Activated CD4-positive, alpha-beta T cell treated with anti-CD3 and anti-CD28 coated beads for 36 hours (primary cell): ENCODE measurements at regions of chr1 and their contacts with region 1.

Region 1: DNA sequence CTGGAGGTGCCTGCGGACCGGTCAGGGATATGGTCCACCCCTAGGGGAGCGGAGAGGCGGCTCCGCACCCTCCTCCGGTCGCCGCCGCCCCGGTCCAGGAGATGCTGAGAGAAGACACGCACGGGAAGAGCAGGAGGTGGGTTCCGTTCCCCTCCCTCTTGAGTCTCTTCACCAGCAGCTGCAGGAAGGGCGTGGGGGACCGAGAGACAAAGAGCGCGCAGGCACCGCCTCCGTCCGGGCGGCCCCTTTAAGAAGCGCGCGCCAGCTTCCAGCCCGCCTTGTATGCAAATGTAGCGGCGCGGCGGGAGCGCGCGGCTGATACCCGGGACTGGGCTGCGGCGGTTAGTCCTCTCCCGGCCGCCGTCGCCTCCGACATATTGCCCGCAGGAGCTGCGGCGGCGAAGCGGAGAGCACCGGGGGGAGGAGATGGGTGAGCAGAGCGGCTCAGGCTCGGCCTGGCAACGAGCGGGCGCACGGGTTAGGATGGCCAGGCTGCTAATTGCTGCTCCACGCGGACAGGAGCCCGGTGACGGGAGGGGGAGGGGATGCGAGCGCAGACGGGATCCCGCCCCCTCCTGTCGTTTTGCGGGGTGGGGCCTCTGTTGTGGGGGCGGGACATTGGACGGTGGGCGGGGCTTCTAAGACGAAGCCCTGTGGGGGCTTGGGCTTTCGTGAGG is at the start of gene TMEM39B:
- DNase-seq: peak; percentile 97
- ATAC-seq: peak; percentile 83
- H3K4me3 Mint-ChIP-seq: peak within 1 kb of the TSS; percentile 90
- H3K27ac Mint-ChIP-seq: peak within 1 kb of the TSS; percentile 98
- H3K4me1 Mint-ChIP-seq: peaks cover 37% of the 10 kb centered on the region
- H3K27me3 Mint-ChIP-seq: no peaks in the 10 kb centered on the region
- total RNA-seq, gene TMEM39B: 25.2 to 29.8 TPM

Region 2: DNA sequence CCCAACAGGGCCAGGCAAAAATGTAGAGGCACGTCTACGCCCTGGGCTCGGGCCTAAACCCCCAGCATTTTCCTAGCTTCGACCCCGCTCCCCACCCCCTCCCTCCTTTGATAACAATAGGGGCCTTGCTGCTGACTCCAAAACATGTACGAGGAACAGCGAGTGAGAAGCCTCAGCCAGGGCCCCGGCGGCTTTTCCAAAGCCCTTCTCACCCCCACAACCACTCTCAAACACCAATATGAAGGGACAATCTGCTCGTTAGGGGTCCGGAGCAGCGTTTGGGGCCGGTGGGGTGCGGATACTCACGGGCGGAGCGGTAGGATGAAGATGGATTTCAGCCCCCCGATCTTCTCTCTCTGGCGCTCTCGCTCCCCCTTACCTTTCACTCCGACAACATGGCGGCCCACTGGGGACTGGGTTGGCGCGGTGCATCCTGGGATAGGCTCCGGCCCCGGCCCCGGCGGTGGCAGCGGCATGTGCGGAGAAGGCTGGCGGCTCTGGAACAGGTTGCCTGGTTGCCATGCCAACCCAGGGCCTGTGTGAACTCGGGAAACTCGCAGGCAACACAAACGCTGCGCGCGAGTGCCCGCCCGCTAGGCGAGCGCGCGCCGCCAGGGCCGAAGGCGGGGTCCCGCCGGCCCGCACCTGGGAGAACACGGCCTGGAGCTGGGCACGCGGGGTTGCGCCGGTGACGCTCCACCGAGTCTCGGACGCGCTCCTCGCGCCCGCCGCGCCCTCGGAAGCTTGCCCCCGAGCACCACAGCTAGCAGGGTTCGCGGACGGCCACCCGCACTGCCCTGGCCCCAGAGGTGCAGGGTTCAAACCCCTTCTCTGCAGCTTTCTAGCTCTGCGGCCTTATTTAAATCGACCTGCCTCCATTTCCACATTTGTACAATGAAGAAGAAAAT is 1007.2 kb before region 1 on chr1 and contains the start of gene PUM1:
- CTCF ChIA-PET with region 1: no interaction called
- POLR2A ChIA-PET with region 1: no interaction called
- intact Hi-C with region 1: loop called in 1 of 2 experiments (anchors 5 kb)
- DNase-seq: peak; percentile 99
- ATAC-seq: peak; percentile 97
- H3K4me3 Mint-ChIP-seq: peak within 1 kb of the TSS; percentile 92
- H3K27ac Mint-ChIP-seq: peak within 1 kb of the TSS; percentile 99
- H3K4me1 Mint-ChIP-seq: peaks cover 22% of the 10 kb centered on the region
- H3K27me3 Mint-ChIP-seq: no peaks in the 10 kb centered on the region
- total RNA-seq, gene PUM1: 87.1 to 91.4 TPM

Region 3: DNA sequence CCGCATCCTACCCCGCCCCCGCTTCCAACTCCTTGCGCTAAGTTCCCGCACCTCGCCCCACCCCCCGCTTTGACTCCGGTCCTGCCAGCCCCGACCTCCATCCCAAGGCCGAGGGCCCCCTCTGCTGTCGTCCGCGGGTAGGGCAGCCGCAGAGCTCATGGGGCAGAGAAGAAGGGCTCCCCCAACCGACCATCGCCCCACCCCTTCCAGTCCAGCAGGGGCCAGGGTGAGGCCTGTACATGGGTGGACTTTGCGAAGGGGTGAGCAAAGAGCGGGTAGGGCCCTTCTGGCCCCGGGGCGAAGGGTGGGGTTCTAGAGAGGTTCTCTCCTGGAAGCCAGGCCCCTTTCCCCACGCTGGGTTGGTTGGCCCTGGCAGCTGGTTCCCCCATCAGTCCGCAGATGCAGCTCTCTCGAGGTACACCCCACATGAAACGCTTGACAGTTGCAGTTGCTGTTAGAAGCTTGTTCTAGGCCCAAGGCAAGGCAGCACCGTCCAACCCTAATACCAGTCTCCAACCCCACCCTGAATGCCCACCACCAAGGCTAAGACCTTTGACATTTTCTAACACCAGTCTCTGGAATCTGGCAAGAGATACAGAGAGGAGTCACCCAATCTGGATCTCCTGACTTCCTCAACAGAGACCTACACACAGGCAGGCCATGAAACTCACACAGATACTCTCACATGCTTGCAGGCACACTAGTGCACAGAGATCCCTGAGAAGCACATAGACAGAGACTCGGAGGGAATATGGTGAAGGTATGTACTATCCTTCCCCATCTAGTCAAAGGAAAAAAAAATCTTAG is 283.3 kb before region 1 on chr1:
- CTCF ChIA-PET with region 1: no interaction called
- POLR2A ChIA-PET with region 1: no interaction called
- intact Hi-C with region 1: loop called in 1 of 2 experiments (anchors 1 kb)
- DNase-seq: peak; percentile 99
- ATAC-seq: peak; percentile 85
- H3K4me3 Mint-ChIP-seq: peak overlapping the region; percentile 75
- H3K27ac Mint-ChIP-seq: no peak overlapping the region
- H3K4me1 Mint-ChIP-seq: peaks cover 10% of the 10 kb centered on the region
- H3K27me3 Mint-ChIP-seq: no peaks in the 10 kb centered on the region

Region 4: GRCh38 chr1:31920956-31921355 is 151.8 kb before region 1 on chr1:
- CTCF ChIA-PET with region 1: no interaction called
- POLR2A ChIA-PET with region 1: no interaction called
- intact Hi-C with region 1: no loop called
- DNase-seq: no peak
- ATAC-seq: no peak
- H3K4me3 Mint-ChIP-seq: peak overlapping the region; percentile 4
- H3K27ac Mint-ChIP-seq: peak overlapping the region; percentile 83
- H3K4me1 Mint-ChIP-seq: peaks cover 71% of the 10 kb centered on the region
- H3K27me3 Mint-ChIP-seq: no peaks in the 10 kb centered on the region

Region 5: GRCh38 chr1:32107742-32108661 is 35.2 kb after region 1 on chr1 and contains the start of gene KPNA6:
- CTCF ChIA-PET with region 1: interaction called, 15 read pairs
- POLR2A ChIA-PET with region 1: interaction called, 19 read pairs
- intact Hi-C with region 1: loop called (anchors 1 kb)
- DNase-seq: peak; percentile 94
- ATAC-seq: peak; percentile 77
- H3K4me3 Mint-ChIP-seq: peak within 1 kb of the TSS; percentile 88
- H3K27ac Mint-ChIP-seq: peak within 1 kb of the TSS; percentile 96
- H3K4me1 Mint-ChIP-seq: peaks cover 39% of the 10 kb centered on the region
- H3K27me3 Mint-ChIP-seq: no peaks in the 10 kb centered on the region
- total RNA-seq, gene KPNA6: 70.0 to 78.3 TPM

Region 6: GRCh38 chr1:32221980-32222755 is 149.4 kb after region 1 on chr1 and contains the starts of genes EIF3I and TMEM234:
- CTCF ChIA-PET with region 1: no interaction called
- POLR2A ChIA-PET with region 1: no interaction called
- intact Hi-C with region 1: loop called in 1 of 2 experiments (anchors 2 kb)
- DNase-seq: peak; percentile 95
- ATAC-seq: peak; percentile 95
- H3K4me3 Mint-ChIP-seq: peak within 1 kb of the TSS; percentile 96
- H3K27ac Mint-ChIP-seq: peak within 1 kb of the TSS; percentile 97
- H3K4me1 Mint-ChIP-seq: peaks cover 29% of the 10 kb centered on the region
- H3K27me3 Mint-ChIP-seq: no peaks in the 10 kb centered on the region
- total RNA-seq, gene EIF3I: 299 to 349 TPM
- total RNA-seq, gene TMEM234: 7.3 to 8.2 TPM

Region 7: DNA sequence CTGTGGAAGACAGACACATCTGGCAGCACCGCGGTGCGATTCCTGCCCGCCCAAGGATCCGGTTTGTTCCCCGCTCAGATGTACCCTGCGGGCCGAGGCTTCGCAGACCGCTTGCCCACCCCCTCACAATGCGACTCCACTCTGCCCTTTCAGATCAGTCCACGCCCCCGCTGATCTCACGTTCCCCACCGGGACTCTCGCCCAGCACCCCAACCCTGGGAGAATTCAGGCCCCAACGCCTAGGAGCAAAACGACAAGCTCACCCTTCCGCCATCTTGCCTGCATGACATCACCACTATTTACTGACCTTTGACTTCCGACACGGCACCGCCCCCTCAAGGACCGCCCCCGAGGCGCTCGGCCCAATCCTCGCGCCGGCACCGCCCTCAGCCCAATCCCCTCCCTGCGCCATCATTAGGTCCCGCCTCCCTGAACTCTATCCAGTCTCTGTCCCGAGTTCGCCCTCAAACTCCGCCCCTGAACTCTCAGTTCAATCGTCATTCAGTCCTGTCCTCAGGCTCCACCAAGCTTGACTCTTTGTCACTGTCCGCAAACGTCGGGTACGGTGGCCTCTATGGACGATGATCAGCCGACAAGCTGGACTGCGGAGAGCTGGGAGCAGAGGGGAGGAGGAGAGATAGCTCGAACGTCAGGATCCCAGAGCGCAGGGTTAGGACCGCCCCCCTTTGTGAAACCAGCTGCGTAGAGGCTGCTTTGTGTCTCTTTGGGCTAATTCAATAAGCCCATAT is 321.6 kb after region 1 on chr1 and contains the start of gene BSDC1:
- CTCF ChIA-PET with region 1: no interaction called
- POLR2A ChIA-PET with region 1: no interaction called
- intact Hi-C with region 1: loop called (anchors 1 kb)
- DNase-seq: peak; percentile 100
- ATAC-seq: peak; percentile 98
- H3K4me3 Mint-ChIP-seq: peak within 1 kb of the TSS; percentile 83
- H3K27ac Mint-ChIP-seq: peak within 1 kb of the TSS; percentile 98
- H3K4me1 Mint-ChIP-seq: peaks cover 19% of the 10 kb centered on the region
- H3K27me3 Mint-ChIP-seq: no peaks in the 10 kb centered on the region
- total RNA-seq, gene BSDC1: 29.4 to 36.9 TPM